Motor neuron (in vitro differentiated cells): ENCODE measurements at regions of chr1 and their contacts with region 1.

Region 1: GRCh38 chr1:107963601-107964335 is 1.2 kb downstream of the VAV3 start:
- ATAC-seq: peak in 6 of 8 experiments; percentile 1 to 25 (median 8)
- H3K4me3 ChIP-seq: peak overlapping the region; percentile 46 to 83 (median 63)
- H3K27ac ChIP-seq: peak overlapping the region in 1 of 2 donors; percentile 72
- H3K4me1 ChIP-seq: peaks cover 4 to 19% of the 10 kb centered on the region in 2 donors

Region 2: GRCh38 chr1:107782217-107782845 is 181.4 kb before region 1 on chr1:
- in situ Hi-C with region 1: loop called in 1 of 9 experiments (anchors 25 kb)
- ATAC-seq: peak in 6 of 8 experiments; percentile 46 to 61 (median 51)
- H3K4me3 ChIP-seq: no peak overlapping the region
- H3K27ac ChIP-seq: no peak overlapping the region
- H3K4me1 ChIP-seq: no peaks in the 10 kb centered on the region

Region 3: DNA sequence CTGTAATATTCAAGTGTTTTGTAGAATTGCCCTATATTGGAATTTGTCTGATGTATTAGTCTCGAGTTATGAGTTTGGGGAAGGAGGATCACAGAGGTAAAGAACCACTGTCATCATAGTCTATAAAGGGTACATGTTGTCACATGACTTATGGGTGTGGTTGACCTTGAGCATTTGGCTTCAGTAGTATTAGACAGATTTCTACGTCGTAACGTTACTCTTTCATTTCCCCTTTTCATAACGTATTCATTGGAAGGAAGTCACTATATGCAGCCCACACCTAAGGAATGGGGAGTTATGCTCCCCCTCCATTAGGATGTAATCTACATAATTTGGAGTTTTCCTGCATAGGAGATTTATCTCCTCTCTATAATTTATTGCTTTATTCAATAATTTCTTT is 111.3 kb after region 1 on chr1:
- in situ Hi-C with region 1: no loop called
- ATAC-seq: no peak
- H3K4me3 ChIP-seq: no peak overlapping the region
- H3K27ac ChIP-seq: no peak overlapping the region
- H3K4me1 ChIP-seq: peaks cover 0 to 3% of the 10 kb centered on the region in 2 donors